Activated T-helper 2 cell treated with anti-CD3 and anti-CD28 coated beads, Interferon-gamma antibody, Interleukin-2, Interleukin-4, amounts not matched to agents 10 μg/mL and 5 μg/mL and 100 μg/mL, durations not matched to agents 14 hours and 24 hours and 36 hours (primary cell): ENCODE measurements at regions of chr1 and their contacts with region 1.

Region 1: GRCh38 chr1:168466092-168466713 is 77.6 kb downstream of the XCL2 start:
- DNase-seq: no peak
- H3K4me3 Mint-ChIP-seq: no peak overlapping the region
- H3K27ac Mint-ChIP-seq: peak overlapping the region; percentile 76
- H3K4me1 Mint-ChIP-seq: peaks cover 58% of the 10 kb centered on the region
- H3K27me3 Mint-ChIP-seq: no peaks in the 10 kb centered on the region

Region 2: DNA sequence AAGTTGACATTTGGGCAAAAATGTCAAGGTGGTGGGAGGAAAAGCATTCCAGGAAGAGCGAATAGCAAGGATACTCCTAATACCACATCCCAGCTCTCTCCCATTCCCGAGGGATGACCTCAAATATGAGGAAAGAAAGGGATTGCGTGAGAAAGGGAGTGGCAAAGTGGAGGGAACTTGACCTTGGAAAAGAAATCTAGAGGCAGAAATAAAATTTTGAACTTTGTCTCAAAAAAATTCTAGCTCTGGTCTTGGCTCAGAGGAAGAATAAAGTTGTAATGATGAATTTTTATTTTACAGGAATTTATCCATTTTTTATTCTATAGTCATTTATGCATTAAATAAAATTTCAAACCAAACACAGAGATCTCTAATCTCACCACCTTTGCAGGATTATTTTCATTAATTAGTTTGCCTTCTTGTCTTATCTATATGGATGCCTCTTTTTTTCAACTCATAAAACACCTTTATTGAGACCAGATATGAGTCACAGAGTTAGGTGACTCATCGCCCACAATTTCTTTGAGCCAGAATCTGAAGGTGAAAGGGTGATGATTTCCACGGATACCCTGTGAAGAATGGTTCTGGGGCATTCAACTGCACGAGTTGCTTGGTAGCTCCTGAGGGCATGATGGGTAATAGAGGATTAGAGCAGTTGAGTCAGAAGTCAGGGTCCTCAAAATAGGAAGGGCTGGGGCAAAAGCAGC is 57.5 kb before region 1 on chr1:
- intact Hi-C with region 1: loop called (anchors 5 kb)
- DNase-seq: peak; percentile 64
- H3K4me3 Mint-ChIP-seq: peak overlapping the region; percentile 40
- H3K27ac Mint-ChIP-seq: peak overlapping the region; percentile 90
- H3K4me1 Mint-ChIP-seq: peaks cover 48% of the 10 kb centered on the region
- H3K27me3 Mint-ChIP-seq: no peaks in the 10 kb centered on the region

Region 3: GRCh38 chr1:168509875-168510791 is 43.9 kb after region 1 on chr1:
- intact Hi-C with region 1: loop called (anchors 2 kb)
- DNase-seq: no peak
- H3K4me3 Mint-ChIP-seq: peak overlapping the region; percentile 1
- H3K27ac Mint-ChIP-seq: peak overlapping the region; percentile 87
- H3K4me1 Mint-ChIP-seq: peaks cover 86% of the 10 kb centered on the region
- H3K27me3 Mint-ChIP-seq: no peaks in the 10 kb centered on the region

Region 4: GRCh38 chr1:168572633-168573032 is 106.4 kb after region 1 on chr1:
- intact Hi-C with region 1: loop called (anchors 5 kb)
- DNase-seq: no peak
- H3K4me3 Mint-ChIP-seq: no peak overlapping the region
- H3K27ac Mint-ChIP-seq: peak overlapping the region; percentile 2
- H3K4me1 Mint-ChIP-seq: peaks cover 33% of the 10 kb centered on the region
- H3K27me3 Mint-ChIP-seq: peaks cover 9% of the 10 kb centered on the region

Region 5: DNA sequence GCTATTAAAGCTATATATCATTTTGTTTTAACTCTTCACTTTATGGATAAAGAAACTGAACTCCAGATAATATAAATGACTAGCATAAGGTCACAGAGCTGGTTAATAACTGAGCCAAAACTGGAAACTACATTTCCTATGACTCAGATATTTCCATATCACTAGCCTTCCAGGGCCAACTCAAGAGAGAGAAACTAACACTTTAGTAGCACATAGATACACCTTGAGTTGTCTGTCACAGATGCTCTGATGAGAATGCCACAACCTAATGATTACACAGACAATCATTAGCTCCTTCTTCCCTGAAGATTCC is 860.7 kb after region 1 on chr1:
- intact Hi-C with region 1: loop called (anchors 10 kb)
- DNase-seq: no peak
- H3K4me3 Mint-ChIP-seq: no peak overlapping the region
- H3K27ac Mint-ChIP-seq: no peak overlapping the region
- H3K4me1 Mint-ChIP-seq: peaks cover 20% of the 10 kb centered on the region
- H3K27me3 Mint-ChIP-seq: no peaks in the 10 kb centered on the region